ENCODE measurements at regions of chr7 and their contacts with region 1.

Region 1: GRCh38 chr7:26090927-26091519 is 61.0 kb upstream of the NFE2L3 start:
- DNase-seq: peak; percentile 80
- H3K4me3 ChIP-seq: no peak overlapping the region
- H3K27ac ChIP-seq: no peak overlapping the region
- H3K4me1 ChIP-seq: peaks cover 0 to 2% of the 10 kb centered on the region in 2 experiments; a peak in 2 of 4 replicates
- H3K27me3 ChIP-seq: no peaks in the 10 kb centered on the region
- CTCF ChIP-seq: peak; percentile 97
- EP300 ChIP-seq: no peak
- RAD21 ChIP-seq: peak; percentile 94

Region 2: DNA sequence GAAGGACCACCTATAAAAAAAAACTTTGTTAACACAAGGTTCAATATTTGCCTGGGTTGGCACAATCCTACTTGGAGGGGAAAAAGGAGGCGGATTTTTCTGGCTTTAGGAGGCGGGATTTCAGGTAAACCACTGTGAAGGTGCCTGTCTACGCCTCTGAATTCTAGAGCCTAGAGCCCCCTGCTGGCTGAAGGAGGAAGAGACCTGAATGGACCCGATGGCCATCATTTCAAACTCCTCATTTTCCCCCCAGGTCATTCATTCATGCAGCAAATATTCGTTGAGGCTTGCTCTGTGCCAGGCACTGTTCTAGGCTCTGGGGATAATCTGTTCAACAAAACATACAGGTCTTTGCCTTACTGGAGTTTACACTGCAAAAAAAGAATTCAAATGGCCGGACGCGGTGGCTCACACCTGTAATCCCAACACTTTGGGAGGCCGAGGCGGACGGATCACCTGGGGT is 29.3 kb before region 1 on chr7:
- CTCF ChIA-PET with region 1: interaction called, 20 read pairs
- POLR2A ChIA-PET with region 1: no interaction called
- DNase-seq: peak; percentile 72
- H3K4me3 ChIP-seq: peak overlapping the region in 1 of 2 experiments; percentile 33; a peak in 1 of 4 replicates
- H3K27ac ChIP-seq: no peak overlapping the region
- H3K4me1 ChIP-seq: peaks cover 0 to 5% of the 10 kb centered on the region in 2 experiments; a peak in 1 of 4 replicates
- H3K27me3 ChIP-seq: peaks cover 23% of the 10 kb centered on the region; the same call in 1 of the 2 replicates
- CTCF ChIP-seq: peak; percentile 94
- EP300 ChIP-seq: no peak
- RAD21 ChIP-seq: peak; percentile 70

Region 3: GRCh38 chr7:26101361-26102151 is 10.5 kb after region 1 on chr7:
- CTCF ChIA-PET with region 1: interaction called, 47 read pairs
- POLR2A ChIA-PET with region 1: no interaction called
- DNase-seq: no peak
- H3K4me3 ChIP-seq: no peak overlapping the region
- H3K27ac ChIP-seq: no peak overlapping the region
- H3K4me1 ChIP-seq: no peaks in the 10 kb centered on the region
- H3K27me3 ChIP-seq: no peaks in the 10 kb centered on the region; the same call in 1 of the 2 replicates
- CTCF ChIP-seq: no peak
- EP300 ChIP-seq: no peak
- RAD21 ChIP-seq: no peak

Region 4: GRCh38 chr7:26127411-26127810 is 36.4 kb after region 1 on chr7:
- CTCF ChIA-PET with region 1: interaction called, 11 read pairs
- POLR2A ChIA-PET with region 1: no interaction called
- DNase-seq: no peak
- H3K4me3 ChIP-seq: no peak overlapping the region
- H3K27ac ChIP-seq: no peak overlapping the region
- H3K4me1 ChIP-seq: no peaks in the 10 kb centered on the region; a peak in 1 of 4 replicates
- H3K27me3 ChIP-seq: no peaks in the 10 kb centered on the region; the same call in 1 of the 2 replicates
- CTCF ChIP-seq: no peak
- EP300 ChIP-seq: no peak
- RAD21 ChIP-seq: no peak

Region 5: DNA sequence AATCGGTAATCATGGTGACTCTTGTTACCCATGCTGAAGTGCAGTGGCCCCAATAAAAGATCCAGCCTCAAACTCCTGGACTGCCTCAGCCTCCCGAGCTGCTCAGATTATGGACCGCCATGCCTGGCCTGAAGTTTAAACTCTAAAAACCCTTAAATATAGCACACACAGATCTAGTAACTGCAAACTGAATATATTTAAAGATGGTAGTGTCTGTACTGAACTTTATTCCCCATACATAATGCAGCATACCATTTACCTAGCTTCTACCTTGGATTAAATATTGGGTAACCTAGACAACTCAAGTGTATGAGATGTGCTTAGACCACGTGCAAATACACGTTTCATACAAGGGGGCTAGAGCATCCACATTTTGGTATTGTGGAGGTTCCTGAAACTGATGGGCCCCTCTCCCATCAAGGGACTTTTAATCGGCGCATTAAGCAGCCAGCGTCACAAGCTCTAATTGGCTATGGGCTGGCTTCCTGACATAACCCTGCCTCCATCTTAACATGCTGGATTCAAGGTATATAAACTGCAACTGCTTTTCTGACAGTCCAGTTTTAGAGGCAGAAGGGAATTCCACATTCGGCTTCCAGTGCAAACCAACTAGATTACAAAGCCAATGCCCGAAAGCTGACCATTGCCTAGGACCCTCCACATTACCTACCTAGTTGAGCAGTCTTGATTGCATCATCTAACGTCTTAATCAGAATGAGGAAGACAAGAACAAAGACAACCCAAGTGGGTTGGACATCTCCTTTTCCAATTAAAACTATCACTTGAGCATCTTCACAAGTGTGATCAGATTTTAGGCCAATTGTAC is 96.6 kb after region 1 on chr7:
- CTCF ChIA-PET with region 1: interaction called, 260 read pairs
- POLR2A ChIA-PET with region 1: no interaction called
- DNase-seq: no peak
- H3K4me3 ChIP-seq: no peak overlapping the region
- H3K27ac ChIP-seq: peak overlapping the region; percentile 13 to 25; a peak in 3 of 4 replicates
- H3K4me1 ChIP-seq: peaks cover 0 to 2% of the 10 kb centered on the region in 2 experiments; a peak in 2 of 4 replicates
- H3K27me3 ChIP-seq: no peaks in the 10 kb centered on the region
- CTCF ChIP-seq: no peak
- EP300 ChIP-seq: no peak
- RAD21 ChIP-seq: no peak

Region 6: DNA sequence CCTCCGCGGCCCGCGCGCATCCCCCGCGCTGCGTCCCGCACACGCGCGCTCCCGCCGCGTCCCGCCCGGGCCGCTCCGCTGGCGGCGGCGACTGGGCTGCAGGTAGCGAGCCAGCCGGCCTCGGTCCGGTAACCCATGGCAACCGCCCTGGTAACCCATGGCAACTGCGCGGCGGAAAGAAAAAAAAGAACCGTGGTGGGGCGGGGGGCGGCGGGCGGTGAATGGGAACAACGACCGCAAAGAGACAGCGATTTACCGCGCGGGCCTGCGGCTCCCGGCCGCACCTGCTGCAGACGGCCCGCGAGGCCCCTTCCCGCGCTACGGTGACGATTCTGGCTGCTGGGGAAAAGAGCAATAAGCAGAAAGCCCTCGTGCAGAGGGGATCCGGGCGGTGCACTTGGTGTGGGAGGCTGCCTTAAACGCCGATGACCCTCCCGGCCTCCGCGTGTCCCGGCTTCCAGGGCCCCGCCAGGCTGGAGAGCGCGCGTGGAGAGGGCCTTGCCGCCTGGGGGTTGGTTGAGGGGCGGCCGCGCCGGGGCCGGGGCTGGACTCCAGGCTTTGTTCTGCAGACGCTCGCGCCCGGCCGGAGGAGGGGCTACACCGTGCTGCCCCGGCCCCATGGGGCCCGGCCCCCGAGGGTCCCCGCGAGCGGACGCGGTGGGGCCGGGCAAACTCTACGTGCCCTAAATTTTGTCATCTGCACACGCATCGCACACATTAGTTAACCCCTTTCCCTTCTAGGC is 285.3 kb after region 1 on chr7:
- CTCF ChIA-PET with region 1: interaction called, 42 read pairs
- POLR2A ChIA-PET with region 1: no interaction called
- DNase-seq: peak; percentile 94
- H3K4me3 ChIP-seq: peak overlapping the region in 1 of 2 experiments; percentile 55; a peak in 2 of 4 replicates
- H3K27ac ChIP-seq: peak overlapping the region in 1 of 2 experiments; percentile 89; a peak in 2 of 4 replicates
- H3K4me1 ChIP-seq: peaks cover 0 to 5% of the 10 kb centered on the region in 2 experiments; a peak in 2 of 4 replicates
- H3K27me3 ChIP-seq: peaks cover 38% of the 10 kb centered on the region
- CTCF ChIP-seq: no peak
- EP300 ChIP-seq: no peak
- RAD21 ChIP-seq: no peak

Measured in SK-N-SH (cell line).